SK-N-SH (cell line): ENCODE measurements at regions of chr14 and their contacts with region 1.

Region 1: DNA sequence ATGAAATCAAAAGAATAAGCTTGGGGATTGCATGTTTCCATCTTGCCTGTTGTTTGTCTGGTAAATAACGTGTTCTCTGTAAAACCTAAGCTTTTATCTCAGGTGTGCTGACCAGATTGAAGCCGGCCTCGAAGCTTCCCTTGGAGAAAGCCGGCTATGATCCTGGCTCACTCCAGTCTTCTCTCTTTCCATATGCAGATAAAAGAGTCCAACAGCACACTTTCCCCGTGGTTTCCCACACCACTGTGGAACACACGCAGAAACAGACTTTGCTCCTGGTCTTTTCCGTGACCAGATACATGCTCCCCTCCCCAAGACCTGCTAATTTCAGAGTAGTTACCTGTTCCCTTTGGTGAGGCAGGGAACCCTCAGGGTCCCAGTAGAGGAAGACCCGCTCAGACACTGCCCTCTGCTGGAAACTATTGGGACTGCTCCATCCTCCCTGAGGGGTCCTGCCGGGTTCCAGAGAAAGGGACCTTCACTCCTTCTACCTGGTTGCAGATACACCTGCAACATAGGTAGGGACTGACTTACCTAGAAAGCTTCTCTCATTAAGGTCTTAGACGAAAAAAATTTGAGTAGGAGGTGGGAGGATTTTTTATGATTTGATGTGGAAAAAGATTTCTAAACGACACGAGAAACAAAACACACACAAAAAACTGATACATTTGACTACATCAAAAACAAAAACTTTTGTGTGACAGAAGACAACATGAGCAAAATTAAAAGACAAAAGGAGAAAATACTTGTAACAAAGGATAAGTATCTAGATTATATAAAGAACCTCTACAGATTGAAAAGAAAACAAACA is 415.5 kb upstream of the CCDC196 start:
- DNase-seq: peak; percentile 63
- H3K4me3 ChIP-seq: peak overlapping the region in 1 of 2 experiments; percentile 43; a peak in 1 of 4 replicates
- H3K27ac ChIP-seq: no peak overlapping the region
- H3K4me1 ChIP-seq: no peaks in the 10 kb centered on the region; a peak in 2 of 4 replicates
- H3K27me3 ChIP-seq: no peaks in the 10 kb centered on the region
- CTCF ChIP-seq: peak; percentile 63
- EP300 ChIP-seq: no peak
- RAD21 ChIP-seq: peak; percentile 72

Region 2: DNA sequence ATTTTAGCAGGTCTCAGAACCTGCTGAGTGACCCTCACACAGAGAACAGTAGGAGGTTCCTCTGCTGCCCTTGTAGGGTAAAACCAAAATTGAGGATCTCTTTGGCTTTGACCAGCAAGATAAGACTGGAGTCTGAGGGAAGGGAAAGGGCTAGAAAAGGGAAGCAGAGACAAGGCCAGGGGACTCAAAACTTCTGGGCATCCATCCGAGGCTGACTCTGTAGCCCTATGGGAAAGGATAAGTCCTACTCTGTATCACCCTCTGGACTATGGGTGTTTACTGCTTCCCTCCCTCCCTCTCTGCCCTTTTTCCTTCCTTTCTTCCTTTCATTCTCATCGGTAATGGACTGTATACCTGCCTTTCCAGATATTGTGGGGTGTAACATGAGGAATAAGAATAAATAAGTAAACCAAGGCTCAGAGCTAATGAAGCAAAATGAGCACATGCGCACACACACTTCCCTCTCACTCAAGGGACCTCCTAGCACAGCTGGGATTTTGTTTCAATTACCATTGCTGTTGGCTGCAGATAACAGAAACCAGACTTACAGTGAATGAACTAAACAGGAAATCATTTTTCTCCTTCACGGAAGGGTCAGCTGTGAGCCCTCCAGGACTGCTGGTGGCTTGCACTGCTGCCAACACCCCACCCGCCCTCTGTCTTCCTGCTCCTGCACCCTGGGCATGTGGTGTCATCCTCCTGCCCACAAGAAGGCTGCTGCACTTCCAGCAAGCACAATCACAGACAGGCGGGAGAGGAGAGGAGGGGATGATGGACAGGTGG is 11.1 kb after region 1 on chr14:
- CTCF ChIA-PET with region 1: interaction called, 18 read pairs
- POLR2A ChIA-PET with region 1: no interaction called
- DNase-seq: peak; percentile 73
- H3K4me3 ChIP-seq: no peak overlapping the region
- H3K27ac ChIP-seq: peak overlapping the region in 1 of 2 experiments; percentile 63; a peak in 2 of 4 replicates
- H3K4me1 ChIP-seq: peaks cover 0 to 9% of the 10 kb centered on the region in 2 experiments; a peak in 1 of 4 replicates
- H3K27me3 ChIP-seq: no peaks in the 10 kb centered on the region
- CTCF ChIP-seq: no peak
- EP300 ChIP-seq: peak in 1 of 2 experiments; percentile 78; a peak in 1 of 4 replicates
- RAD21 ChIP-seq: no peak

Region 3: GRCh38 chr14:66105815-66106214 is 35.1 kb after region 1 on chr14:
- CTCF ChIA-PET with region 1: no interaction called
- POLR2A ChIA-PET with region 1: no interaction called
- DNase-seq: no peak
- H3K4me3 ChIP-seq: no peak overlapping the region
- H3K27ac ChIP-seq: no peak overlapping the region
- H3K4me1 ChIP-seq: peaks cover 0 to 3% of the 10 kb centered on the region in 2 experiments; a peak in 1 of 4 replicates
- H3K27me3 ChIP-seq: no peaks in the 10 kb centered on the region
- CTCF ChIP-seq: no peak
- EP300 ChIP-seq: no peak
- RAD21 ChIP-seq: no peak